HepG2 (cell line): ENCODE measurements at regions of chr9 and their contacts with region 1.

Region 1: DNA sequence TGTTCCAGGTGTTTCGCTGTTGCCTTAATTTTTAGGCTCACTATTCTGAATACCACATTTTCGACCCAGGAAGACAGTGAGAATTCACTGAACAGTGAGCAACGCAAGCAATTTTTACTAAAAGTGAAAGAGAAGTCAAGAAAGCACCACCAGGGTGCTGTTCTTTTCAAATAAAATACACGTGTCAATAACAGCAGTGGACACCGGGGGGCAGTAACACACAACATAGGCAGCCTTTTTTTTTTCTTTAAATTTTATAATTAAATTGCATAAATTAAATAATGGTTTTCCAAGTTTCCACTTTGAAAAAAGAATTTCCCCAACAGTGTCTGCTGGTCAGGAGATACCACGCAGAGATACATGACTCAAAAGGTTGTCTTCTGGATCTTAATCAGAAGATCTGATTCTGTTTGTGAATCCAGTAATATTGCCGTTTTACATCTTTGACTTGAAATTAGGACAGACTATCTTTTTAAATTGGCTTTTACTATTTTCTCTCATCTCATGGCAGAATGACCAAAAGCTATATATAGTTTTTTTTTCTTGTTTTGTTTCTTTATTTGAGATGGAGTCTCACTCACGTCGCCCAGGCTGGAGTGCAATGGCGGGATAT is 47.1 kb upstream of the SH3GL2 start:
- DNase-seq: peak; percentile 32
- ATAC-seq: peak; percentile 86
- H3K4me3 ChIP-seq: no peak overlapping the region
- H3K27ac ChIP-seq: no peak overlapping the region
- H3K4me1 ChIP-seq: no peaks in the 10 kb centered on the region
- H3K27me3 ChIP-seq: 0 out of 5 replicates have a peak, but pooled peaks cover 0 to 4% of the 10 kb centered on the region in 2 experiments
- CTCF ChIP-seq: peak; percentile 47
- EP300 ChIP-seq: no peak
- POLR2A ChIP-seq: no peak
- RAD21 ChIP-seq: no peak

Region 2: DNA sequence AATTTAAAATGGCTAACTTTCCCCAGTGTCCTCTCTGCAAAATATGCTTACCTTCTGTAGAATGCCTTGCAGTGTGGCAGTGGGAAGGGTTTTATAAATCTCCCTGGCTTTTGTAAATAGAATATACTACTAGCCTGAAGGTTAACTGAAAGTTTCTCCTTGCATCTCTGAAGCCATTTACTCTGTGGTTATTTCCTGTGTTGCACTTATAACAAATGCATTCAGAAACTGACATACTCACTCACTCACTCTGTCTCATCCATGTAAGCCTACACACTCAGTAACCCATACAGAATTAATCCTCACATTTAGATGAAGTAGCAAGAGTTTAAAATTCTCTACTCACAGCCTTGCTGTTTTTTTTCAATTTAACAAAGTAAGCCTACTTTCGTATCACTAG is 40.0 kb before region 1 on chr9:
- CTCF ChIA-PET with region 1: no interaction called
- POLR2A ChIA-PET with region 1: no interaction called
- in situ Hi-C with region 1: no loop called
- intact Hi-C with region 1: no loop called
- DNase-seq: no peak
- ATAC-seq: no peak
- H3K4me3 ChIP-seq: no peak overlapping the region
- H3K27ac ChIP-seq: no peak overlapping the region
- H3K4me1 ChIP-seq: no peaks in the 10 kb centered on the region
- H3K27me3 ChIP-seq: no peaks in the 10 kb centered on the region
- CTCF ChIP-seq: no peak
- EP300 ChIP-seq: no peak
- POLR2A ChIP-seq: no peak
- RAD21 ChIP-seq: no peak

Region 3: DNA sequence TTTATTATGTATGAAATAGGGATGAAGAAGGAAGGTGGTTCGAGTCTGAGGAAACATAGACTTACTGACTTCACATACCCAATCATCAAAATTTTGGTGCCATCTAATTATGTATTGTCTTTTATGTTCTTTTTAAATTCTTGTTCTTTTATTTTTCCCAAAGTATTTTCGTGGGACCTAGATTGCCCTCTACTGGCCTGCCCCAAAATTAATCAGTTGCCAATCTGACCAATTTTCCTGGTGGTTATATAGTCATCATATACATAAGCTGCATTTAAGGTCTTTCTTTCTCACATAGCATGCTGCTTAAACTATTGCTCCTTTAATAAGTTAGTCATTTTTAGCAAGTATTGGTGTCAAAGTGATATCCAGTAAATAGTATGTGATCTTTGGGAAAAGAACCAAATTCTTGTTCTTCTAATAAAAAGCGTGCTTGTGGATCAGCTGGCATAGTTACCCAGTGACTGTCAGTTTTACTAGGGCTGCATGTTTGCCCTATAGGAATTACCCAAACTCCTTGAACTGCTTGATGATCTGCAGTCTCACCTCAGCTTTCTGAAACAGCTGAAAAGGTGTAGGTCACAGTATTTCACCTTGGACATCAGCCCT is 270.6 kb after region 1 on chr9:
- CTCF ChIA-PET with region 1: no interaction called
- POLR2A ChIA-PET with region 1: no interaction called
- in situ Hi-C with region 1: loop called (anchors 5 kb)
- intact Hi-C with region 1: loop called (anchors 2 kb)
- DNase-seq: no peak
- ATAC-seq: no peak
- H3K4me3 ChIP-seq: no peak overlapping the region
- H3K27ac ChIP-seq: no peak overlapping the region
- H3K4me1 ChIP-seq: no peaks in the 10 kb centered on the region
- H3K27me3 ChIP-seq: no peaks in the 10 kb centered on the region
- CTCF ChIP-seq: 0 out of 2 replicates have a peak, but pooled peaks have one; percentile 22
- EP300 ChIP-seq: no peak
- POLR2A ChIP-seq: no peak
- RAD21 ChIP-seq: no peak

Region 4: DNA sequence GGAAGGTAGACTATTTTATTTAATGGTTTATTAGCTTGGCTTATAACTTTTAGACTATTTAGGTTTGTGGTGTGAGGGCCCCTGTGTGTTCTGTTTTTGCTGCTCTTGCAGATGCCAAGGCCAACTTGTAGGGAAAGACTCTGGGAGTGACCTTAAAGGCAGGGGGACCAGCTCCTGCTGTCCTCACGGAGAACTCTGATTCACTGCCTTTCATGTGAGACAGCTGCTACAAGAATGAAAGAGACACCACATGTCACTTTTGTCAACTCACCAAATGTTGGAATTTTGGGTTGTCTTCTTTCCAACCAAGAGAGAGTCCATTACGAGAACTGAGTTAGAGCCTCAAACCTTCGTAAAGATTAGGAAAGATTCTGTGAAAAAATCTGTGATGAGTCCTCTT is 683.9 kb after region 1 on chr9:
- CTCF ChIA-PET with region 1: no interaction called
- POLR2A ChIA-PET with region 1: no interaction called
- in situ Hi-C with region 1: loop called (anchors 10 kb)
- intact Hi-C with region 1: loop called (anchors 2 kb)
- DNase-seq: no peak
- ATAC-seq: no peak
- H3K4me3 ChIP-seq: no peak overlapping the region
- H3K27ac ChIP-seq: no peak overlapping the region
- H3K4me1 ChIP-seq: no peaks in the 10 kb centered on the region
- H3K27me3 ChIP-seq: no peaks in the 10 kb centered on the region
- CTCF ChIP-seq: no peak
- EP300 ChIP-seq: no peak
- POLR2A ChIP-seq: no peak
- RAD21 ChIP-seq: no peak